Endothelial cell of umbilical vein (primary cell): ENCODE measurements at regions of chr11 and their contacts with region 1.

Region 1: DNA sequence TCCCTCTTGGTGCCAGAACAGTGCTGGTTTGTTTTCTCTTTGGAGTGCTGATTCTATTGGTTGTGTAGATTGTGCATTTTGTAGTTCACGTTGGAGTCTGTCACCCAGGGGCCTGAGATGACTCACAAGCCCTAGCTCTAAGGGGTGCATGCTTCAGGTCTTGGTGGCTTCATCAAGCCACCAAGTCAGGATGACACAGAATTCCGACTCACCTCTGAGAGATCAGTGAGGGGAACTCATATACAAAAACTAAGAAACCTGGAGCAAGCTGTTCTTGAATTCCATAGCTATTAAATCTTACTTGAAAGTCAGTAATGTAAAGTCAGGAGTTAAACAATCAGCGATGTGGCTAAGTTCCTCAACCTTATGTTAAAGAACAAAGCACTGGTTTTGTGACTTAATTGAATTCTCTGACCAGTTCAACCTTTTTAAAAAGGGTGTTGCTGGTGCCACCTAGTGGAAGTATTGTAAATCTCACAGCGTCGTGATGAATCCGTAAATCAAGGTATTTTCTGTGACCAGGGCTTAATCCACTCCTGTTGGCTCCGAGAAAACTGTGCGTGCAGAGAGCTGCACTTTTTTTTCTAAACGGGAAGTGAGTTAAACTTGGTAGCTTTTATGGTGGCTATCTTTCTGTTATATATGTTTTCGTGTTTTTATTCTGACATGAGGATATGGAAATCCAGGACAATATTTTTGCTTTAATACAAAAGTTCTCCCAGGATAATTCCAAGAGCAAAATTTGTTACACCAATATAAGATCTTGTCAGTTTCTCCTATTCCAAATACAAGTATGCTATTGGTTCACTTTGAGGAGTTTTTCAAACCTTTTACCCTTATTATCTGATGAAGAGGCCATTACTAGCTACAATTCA is 14.6 kb downstream of the MMP13 start:
- DNase-seq: peak; percentile 79
- H3K4me3 ChIP-seq: no peak overlapping the region
- H3K27ac ChIP-seq: no peak overlapping the region
- H3K4me1 ChIP-seq: no peaks in the 10 kb centered on the region
- H3K27me3 ChIP-seq: no peaks in the 10 kb centered on the region
- CTCF ChIP-seq: peak; percentile 65 to 67
- POLR2A ChIP-seq: no peak

Region 2: DNA sequence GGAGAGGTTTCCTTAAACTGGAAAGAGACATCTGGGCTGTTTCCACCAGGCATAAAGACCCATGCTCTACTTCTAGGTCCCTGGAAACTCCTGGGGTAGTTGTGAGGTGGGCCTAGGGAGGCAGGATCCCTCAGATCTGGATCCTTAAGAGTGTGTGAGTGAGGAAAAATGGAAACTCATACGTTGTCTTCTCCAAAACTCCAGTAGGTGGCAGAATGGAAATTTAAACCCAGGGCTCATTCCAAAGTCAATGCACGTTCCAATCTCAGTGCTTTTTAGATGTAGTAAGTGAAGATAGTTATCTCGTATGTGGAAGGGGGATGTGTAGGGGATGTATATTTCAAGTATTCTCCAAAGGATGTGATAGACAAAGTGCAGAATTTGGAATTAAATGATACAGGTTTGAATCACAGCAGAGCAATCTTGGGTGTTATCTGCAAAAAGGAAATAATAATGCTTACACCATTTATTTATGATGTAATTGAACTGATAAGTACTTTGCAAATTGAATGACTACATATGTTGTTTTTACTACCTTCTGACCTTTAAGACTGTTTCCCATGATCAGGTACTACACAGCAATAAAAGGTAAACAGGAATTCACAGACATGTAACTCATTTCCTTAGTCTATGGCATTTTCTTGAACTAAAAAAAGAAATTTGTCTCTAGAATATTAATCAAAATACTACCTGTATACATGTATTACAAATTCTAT is 129.8 kb before region 1 on chr11:
- CTCF ChIA-PET with region 1: interaction called, 7 read pairs
- POLR2A ChIA-PET with region 1: no interaction called
- dilution Hi-C with region 1: no loop called
- intact Hi-C with region 1: loop called (anchors 1 kb)
- DNase-seq: peak; percentile 34
- H3K4me3 ChIP-seq: no peak overlapping the region
- H3K27ac ChIP-seq: no peak overlapping the region
- H3K4me1 ChIP-seq: no peaks in the 10 kb centered on the region
- H3K27me3 ChIP-seq: peaks cover 10 to 13% of the 10 kb centered on the region in 2 experiments
- CTCF ChIP-seq: peak; percentile 28 to 43
- POLR2A ChIP-seq: no peak

Region 3: GRCh38 chr11:102831489-102832440 is 109.2 kb before region 1 on chr11:
- CTCF ChIA-PET with region 1: interaction called, 15 read pairs
- POLR2A ChIA-PET with region 1: no interaction called
- dilution Hi-C with region 1: no loop called
- intact Hi-C with region 1: loop called (anchors 1 kb)
- DNase-seq: peak; percentile 63
- H3K4me3 ChIP-seq: peak overlapping the region in 2 of 3 experiments; percentile 15 to 40
- H3K27ac ChIP-seq: no peak overlapping the region
- H3K4me1 ChIP-seq: no peaks in the 10 kb centered on the region
- H3K27me3 ChIP-seq: peaks cover 5 to 13% of the 10 kb centered on the region in 2 experiments
- CTCF ChIP-seq: peak; percentile 62 to 71
- POLR2A ChIP-seq: no peak

Region 4: GRCh38 chr11:103055221-103055890 is 114.4 kb after region 1 on chr11:
- CTCF ChIA-PET with region 1: interaction called, 17 read pairs
- POLR2A ChIA-PET with region 1: no interaction called
- dilution Hi-C with region 1: no loop called
- intact Hi-C with region 1: loop called (anchors 1 kb)
- DNase-seq: peak; percentile 54
- H3K4me3 ChIP-seq: no peak overlapping the region
- H3K27ac ChIP-seq: no peak overlapping the region
- H3K4me1 ChIP-seq: no peaks in the 10 kb centered on the region
- H3K27me3 ChIP-seq: no peaks in the 10 kb centered on the region
- CTCF ChIP-seq: peak; percentile 43 to 45
- POLR2A ChIP-seq: no peak